CD4-positive, alpha-beta T cell (primary cell): ENCODE measurements at regions of chr17 and their contacts with region 1.

Region 1: DNA sequence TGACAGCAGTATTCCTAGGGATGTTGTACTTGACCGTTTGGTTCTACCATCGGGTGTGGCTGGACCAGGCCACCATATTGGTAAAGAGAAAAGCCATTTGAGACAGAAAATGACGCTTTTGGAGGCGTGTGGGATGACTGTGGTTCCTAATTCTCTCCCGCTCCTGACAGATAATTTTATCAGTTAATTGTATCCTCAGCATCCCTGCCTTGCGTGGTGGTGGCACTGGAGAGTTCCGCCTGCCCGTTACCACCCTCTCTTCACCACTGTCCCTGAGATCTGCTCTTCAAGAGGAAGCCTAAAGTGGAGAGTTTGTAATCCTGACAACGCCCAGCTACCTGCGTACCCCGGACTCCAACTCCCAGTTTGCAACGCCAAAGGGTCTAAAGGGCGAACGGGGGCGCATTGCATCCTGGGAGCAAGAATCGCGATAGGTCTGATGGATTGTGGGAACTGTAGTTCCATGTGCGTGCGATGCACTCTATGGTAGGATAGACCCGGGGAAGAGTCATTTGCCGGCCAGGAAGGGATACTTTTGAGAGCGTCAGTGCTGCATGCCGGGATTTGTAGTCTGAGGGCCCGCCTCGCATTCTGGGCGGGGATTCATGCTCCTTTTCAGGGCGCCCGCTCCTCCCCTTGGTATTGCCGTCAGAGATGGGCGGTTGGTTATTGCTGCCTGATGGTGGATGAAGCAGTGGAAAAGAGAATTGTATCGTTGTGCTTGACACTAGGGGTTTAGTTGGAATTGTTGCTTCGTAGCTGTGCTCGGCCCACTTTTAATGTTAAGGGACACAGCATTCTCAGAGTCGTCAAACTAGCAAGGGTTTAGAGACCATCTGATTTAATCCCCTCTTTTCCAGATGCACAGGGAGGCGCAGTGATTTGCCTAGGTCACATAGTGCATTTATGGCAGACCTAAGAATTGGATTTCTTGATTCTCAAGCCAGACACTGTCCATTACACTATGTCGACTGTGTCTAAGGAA is 965 bp upstream of the PHF12 start:
- DNase-seq: peak; percentile 89 to 100 (median 94)
- ATAC-seq: peak; percentile 71
- H3K4me3 ChIP-seq: peak overlapping the region; percentile 64
- H3K4me3 Mint-ChIP-seq: no peak overlapping the region
- H3K27ac ChIP-seq: peak overlapping the region; percentile 94 to 97
- H3K27ac Mint-ChIP-seq: no peak overlapping the region
- H3K4me1 ChIP-seq: peaks cover 34% of the 10 kb centered on the region
- H3K4me1 Mint-ChIP-seq: peaks cover 15% of the 10 kb centered on the region
- H3K27me3 ChIP-seq: no peaks in the 10 kb centered on the region
- H3K27me3 Mint-ChIP-seq: no peaks in the 10 kb centered on the region
- CTCF ChIP-seq: no peak

Region 2: GRCh38 chr17:28335201-28335955 is 616.9 kb before region 1 on chr17 and contains the starts of genes IFT20 and TNFAIP1:
- CTCF ChIA-PET with region 1: no interaction called
- POLR2A ChIA-PET with region 1: interaction called, 24 read pairs
- intact Hi-C with region 1: loop called in 1 of 2 experiments (anchors 2 kb)
- DNase-seq: peak; percentile 92 to 100 (median 96)
- ATAC-seq: peak; percentile 95
- H3K4me3 ChIP-seq: peak within 1 kb of the TSS; percentile 92
- H3K4me3 Mint-ChIP-seq: peak within 1 kb of the TSS; percentile 98
- H3K27ac ChIP-seq: peak within 1 kb of the TSS; percentile 87 to 91
- H3K27ac Mint-ChIP-seq: peak within 1 kb of the TSS; percentile 88
- H3K4me1 ChIP-seq: peaks cover 38% of the 10 kb centered on the region
- H3K4me1 Mint-ChIP-seq: peaks cover 56% of the 10 kb centered on the region
- H3K27me3 ChIP-seq: no peaks in the 10 kb centered on the region
- H3K27me3 Mint-ChIP-seq: no peaks in the 10 kb centered on the region
- CTCF ChIP-seq: no peak
- total RNA-seq, gene IFT20: 52.6 to 53.1 TPM
- total RNA-seq, gene TNFAIP1: 9.5 to 12.1 TPM

Region 3: GRCh38 chr17:28661635-28662537 is 290.4 kb before region 1 on chr17 and contains the starts of genes SDF2 and SUPT6H:
- CTCF ChIA-PET with region 1: interaction called, 3 read pairs
- POLR2A ChIA-PET with region 1: interaction called, 12 read pairs
- intact Hi-C with region 1: loop called in 1 of 2 experiments (anchors 5 kb)
- DNase-seq: peak; percentile 88 to 97 (median 92)
- ATAC-seq: peak; percentile 83
- H3K4me3 ChIP-seq: peak within 1 kb of the TSS; percentile 81
- H3K4me3 Mint-ChIP-seq: peak within 1 kb of the TSS; percentile 99
- H3K27ac ChIP-seq: peak within 1 kb of the TSS; percentile 97 to 99
- H3K27ac Mint-ChIP-seq: peak within 1 kb of the TSS; percentile 99
- H3K4me1 ChIP-seq: peaks cover 45% of the 10 kb centered on the region
- H3K4me1 Mint-ChIP-seq: peaks cover 64% of the 10 kb centered on the region
- H3K27me3 ChIP-seq: no peaks in the 10 kb centered on the region
- H3K27me3 Mint-ChIP-seq: no peaks in the 10 kb centered on the region
- CTCF ChIP-seq: no peak
- total RNA-seq, gene SDF2: 30.3 to 32.0 TPM
- total RNA-seq, gene SUPT6H: 149 to 151 TPM

Region 4: DNA sequence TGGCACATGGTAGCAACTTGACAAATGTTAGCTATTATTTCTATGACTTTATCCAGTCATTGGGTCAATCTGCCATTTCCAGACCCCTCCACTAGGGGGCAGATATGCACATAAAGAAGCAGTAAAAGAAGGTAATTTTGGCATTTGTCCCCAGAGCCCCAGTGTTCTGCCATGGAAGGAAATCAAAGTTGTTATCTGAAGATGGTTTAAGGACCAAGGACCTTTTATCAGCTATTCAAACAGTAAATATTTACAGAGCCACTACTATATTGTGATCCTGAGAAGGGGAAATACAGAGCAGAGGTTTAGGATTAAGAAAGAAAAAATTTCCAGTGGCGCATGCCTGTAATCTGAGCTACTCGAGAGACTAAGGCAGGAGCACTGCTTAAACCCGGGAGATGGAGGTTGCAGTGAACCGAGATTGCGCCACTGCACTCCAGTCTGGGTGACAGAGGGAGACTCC is 188.4 kb before region 1 on chr17:
- CTCF ChIA-PET with region 1: interaction called, 19 read pairs
- POLR2A ChIA-PET with region 1: interaction called, 8 read pairs
- intact Hi-C with region 1: loop called in 1 of 2 experiments (anchors 1 kb)
- DNase-seq: peak; percentile 61 to 85 (median 76)
- ATAC-seq: peak; percentile 89
- H3K4me3 ChIP-seq: no peak overlapping the region
- H3K4me3 Mint-ChIP-seq: no peak overlapping the region
- H3K27ac ChIP-seq: no peak overlapping the region
- H3K27ac Mint-ChIP-seq: peak overlapping the region; percentile 7
- H3K4me1 ChIP-seq: no peaks in the 10 kb centered on the region
- H3K4me1 Mint-ChIP-seq: peaks cover 8% of the 10 kb centered on the region
- H3K27me3 ChIP-seq: no peaks in the 10 kb centered on the region
- H3K27me3 Mint-ChIP-seq: no peaks in the 10 kb centered on the region
- CTCF ChIP-seq: peak; percentile 97

Region 5: DNA sequence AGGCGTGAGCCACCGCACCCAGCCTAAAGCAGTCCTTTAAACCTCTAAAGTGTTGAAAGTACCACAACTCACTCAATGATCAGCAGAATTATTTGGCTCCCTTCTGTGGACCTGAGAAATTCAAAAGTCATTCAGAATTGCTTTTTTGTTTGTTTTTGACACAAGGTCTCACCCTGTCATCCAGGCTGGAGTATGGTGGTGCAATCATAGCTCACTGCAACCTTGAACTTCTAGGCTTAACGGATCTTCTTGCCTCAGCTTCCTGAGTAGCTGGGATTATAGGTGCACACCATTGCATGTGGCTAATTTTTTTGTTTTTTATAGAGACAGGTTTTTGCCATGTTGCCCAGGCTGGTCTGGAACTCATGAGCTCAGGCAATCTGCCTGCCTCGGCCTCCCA is 164.2 kb before region 1 on chr17:
- CTCF ChIA-PET with region 1: no interaction called
- POLR2A ChIA-PET with region 1: no interaction called
- intact Hi-C with region 1: no loop called
- DNase-seq: no peak
- ATAC-seq: no peak
- H3K4me3 ChIP-seq: no peak overlapping the region
- H3K4me3 Mint-ChIP-seq: no peak overlapping the region
- H3K27ac ChIP-seq: no peak overlapping the region
- H3K27ac Mint-ChIP-seq: no peak overlapping the region
- H3K4me1 ChIP-seq: no peaks in the 10 kb centered on the region
- H3K4me1 Mint-ChIP-seq: peaks cover 27% of the 10 kb centered on the region
- H3K27me3 ChIP-seq: no peaks in the 10 kb centered on the region
- H3K27me3 Mint-ChIP-seq: no peaks in the 10 kb centered on the region
- CTCF ChIP-seq: no peak

Region 6: DNA sequence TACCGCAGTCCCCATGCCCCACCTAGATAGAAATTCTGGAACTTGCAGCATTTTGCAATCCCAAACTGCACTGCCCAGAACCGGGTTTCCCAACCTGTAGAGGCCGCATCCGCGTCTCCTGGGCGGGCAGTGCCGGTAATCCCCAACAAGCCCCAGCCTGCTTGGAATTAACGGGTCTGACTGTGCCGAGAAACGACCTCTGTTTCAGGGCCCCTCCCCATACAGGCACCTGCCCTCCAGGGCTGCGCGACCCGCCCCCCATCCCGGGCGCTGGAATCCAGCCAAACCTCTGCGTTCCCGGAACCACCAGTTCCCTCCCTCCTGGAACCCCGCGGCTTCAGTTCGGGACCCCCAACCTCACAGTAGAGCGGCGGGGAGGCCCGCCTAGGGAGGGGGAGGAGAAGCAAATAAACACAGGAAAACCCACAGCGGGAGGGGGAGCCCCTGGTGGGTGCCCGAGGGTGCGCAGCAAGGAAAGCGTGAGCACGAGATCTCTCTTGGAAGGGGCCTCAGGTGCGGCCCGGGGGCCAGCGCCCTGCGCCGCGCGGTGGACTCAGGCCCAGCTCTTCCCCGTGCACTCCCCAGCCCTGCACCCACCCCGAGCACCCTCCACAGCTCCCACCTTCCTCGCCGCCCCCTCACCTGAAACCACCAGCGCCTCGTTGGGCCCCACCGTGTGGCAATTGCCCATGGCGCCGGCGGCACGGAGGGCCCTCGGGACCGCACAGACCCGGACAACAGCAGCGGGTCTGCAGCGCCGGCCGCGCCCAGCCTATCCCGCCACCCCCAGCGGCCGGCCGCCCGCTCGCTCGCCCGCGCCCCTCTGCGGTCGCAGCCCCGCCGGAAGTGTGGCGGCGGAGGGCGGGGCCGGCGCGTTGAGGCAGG is 55.2 kb before region 1 on chr17 and contains the start of gene FLOT2:
- CTCF ChIA-PET with region 1: interaction called, 56 read pairs
- POLR2A ChIA-PET with region 1: interaction called, 37 read pairs
- intact Hi-C with region 1: no loop called
- DNase-seq: peak; percentile 50 to 83 (median 68)
- ATAC-seq: peak; percentile 79
- H3K4me3 ChIP-seq: peak within 1 kb of the TSS; percentile 83
- H3K4me3 Mint-ChIP-seq: peak within 1 kb of the TSS; percentile 93
- H3K27ac ChIP-seq: peak within 1 kb of the TSS; percentile 86 to 87
- H3K27ac Mint-ChIP-seq: peak within 1 kb of the TSS; percentile 95
- H3K4me1 ChIP-seq: peaks cover 75% of the 10 kb centered on the region
- H3K4me1 Mint-ChIP-seq: peaks cover 66% of the 10 kb centered on the region
- H3K27me3 ChIP-seq: no peaks in the 10 kb centered on the region
- H3K27me3 Mint-ChIP-seq: no peaks in the 10 kb centered on the region
- CTCF ChIP-seq: peak; percentile 60
- total RNA-seq, gene FLOT2: 79.7 to 85.1 TPM

Region 7: GRCh38 chr17:28937044-28937729 is 15.1 kb before region 1 on chr17:
- CTCF ChIA-PET with region 1: interaction called, 3 read pairs
- POLR2A ChIA-PET with region 1: interaction called, 18 read pairs
- intact Hi-C with region 1: no loop called
- DNase-seq: no peak
- ATAC-seq: no peak
- H3K4me3 ChIP-seq: no peak overlapping the region
- H3K4me3 Mint-ChIP-seq: no peak overlapping the region
- H3K27ac ChIP-seq: no peak overlapping the region
- H3K27ac Mint-ChIP-seq: peak overlapping the region; percentile 65
- H3K4me1 ChIP-seq: peaks cover 64% of the 10 kb centered on the region
- H3K4me1 Mint-ChIP-seq: peaks cover 88% of the 10 kb centered on the region
- H3K27me3 ChIP-seq: no peaks in the 10 kb centered on the region
- H3K27me3 Mint-ChIP-seq: no peaks in the 10 kb centered on the region
- CTCF ChIP-seq: no peak